ENCODE measurements at regions of chr11 and their contacts with region 1.

Region 1: GRCh38 chr11:86193297-86194095 is 51.1 kb upstream of the EED start:
- DNase-seq: peak; percentile 56 to 91
- ATAC-seq: peak; percentile 97 to 100 (median 98)
- H3K4me3 ChIP-seq: peak overlapping the region in 7 of 10 donors; percentile 23 to 40 (median 36)
- H3K27ac ChIP-seq: peak overlapping the region in 9 of 10 donors; percentile 45 to 91 (median 65)
- H3K4me1 ChIP-seq: peaks cover 0 to 75% (median 20%) of the 10 kb centered on the region in 9 donors
- H3K27me3 ChIP-seq: no peaks in the 10 kb centered on the region
- CTCF ChIP-seq: peak; percentile 59 to 91 (median 80)

Region 2: GRCh38 chr11:85947431-85948272 is 245.8 kb before region 1 on chr11:
- intact Hi-C with region 1: loop called in 1 of 10 experiments (anchors 5 kb)
- DNase-seq: peak in 1 of 2 donors; percentile 74
- ATAC-seq: peak; percentile 64 to 90 (median 85)
- H3K4me3 ChIP-seq: no peak overlapping the region
- H3K27ac ChIP-seq: peak overlapping the region in 8 of 10 donors; percentile 30 to 86 (median 65)
- H3K4me1 ChIP-seq: peaks cover 8 to 40% (median 32%) of the 10 kb centered on the region in 9 donors
- H3K27me3 ChIP-seq: no peaks in the 10 kb centered on the region
- CTCF ChIP-seq: no peak

Region 3: GRCh38 chr11:86041975-86042378 is 151.5 kb before region 1 on chr11:
- intact Hi-C with region 1: loop called (anchors 2 to 10 kb)
- DNase-seq: peak in 1 of 2 donors; percentile 89
- ATAC-seq: peak; percentile 69 to 94 (median 86)
- H3K4me3 ChIP-seq: peak overlapping the region in 7 of 10 donors; percentile 2 to 42 (median 30)
- H3K27ac ChIP-seq: peak overlapping the region in 8 of 10 donors; percentile 2 to 79 (median 61)
- H3K4me1 ChIP-seq: peaks cover 0 to 95% (median 75%) of the 10 kb centered on the region in 9 donors
- H3K27me3 ChIP-seq: no peaks in the 10 kb centered on the region
- CTCF ChIP-seq: peak; percentile 75 to 94 (median 90)

Region 4: GRCh38 chr11:86062719-86063118 is 130.8 kb before region 1 on chr11:
- intact Hi-C with region 1: loop called in 3 of 10 experiments (anchors 2 to 5 kb)
- DNase-seq: no peak
- ATAC-seq: peak in 7 of 8 donors; percentile 23 to 80 (median 35)
- H3K4me3 ChIP-seq: peak overlapping the region in 6 of 10 donors; percentile 1 to 78 (median 11)
- H3K27ac ChIP-seq: peak overlapping the region in 9 of 10 donors; percentile 16 to 99 (median 47)
- H3K4me1 ChIP-seq: peaks cover 0 to 87% (median 86%) of the 10 kb centered on the region in 9 donors
- H3K27me3 ChIP-seq: no peaks in the 10 kb centered on the region
- CTCF ChIP-seq: no peak

Region 5: DNA sequence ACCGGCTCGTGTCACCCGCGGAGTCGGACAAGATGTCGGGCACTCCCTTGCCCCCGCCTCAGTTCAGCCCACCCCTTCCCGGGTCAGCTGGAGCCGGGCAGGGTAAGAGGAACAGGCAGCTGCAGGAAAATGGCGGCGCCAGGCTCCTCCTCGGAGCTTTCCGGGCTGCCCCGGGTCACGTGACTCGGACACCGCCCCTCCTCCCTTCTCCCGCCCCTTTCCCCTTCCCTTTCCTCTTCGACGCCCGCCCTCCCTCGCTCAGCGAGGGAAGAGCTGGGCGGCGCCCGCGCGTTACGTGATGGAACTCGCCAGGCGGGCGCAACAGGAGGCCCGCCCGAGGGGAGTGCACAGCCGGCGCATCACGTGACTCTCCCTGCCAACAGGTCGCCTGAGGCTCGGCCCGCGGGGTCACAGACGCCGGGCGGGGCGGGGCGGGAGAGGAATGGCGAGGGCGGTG is 124.5 kb before region 1 on chr11 and contains the start of gene PICALM:
- intact Hi-C with region 1: loop called in 6 of 10 experiments (anchors 1 to 5 kb)
- DNase-seq: peak; percentile 98 to 99
- ATAC-seq: peak; percentile 92 to 98 (median 96)
- H3K4me3 ChIP-seq: peak within 1 kb of the TSS; percentile 77 to 99 (median 92)
- H3K27ac ChIP-seq: peak within 1 kb of the TSS; percentile 96 to 99 (median 98)
- H3K4me1 ChIP-seq: peaks cover 2 to 44% (median 34%) of the 10 kb centered on the region in 9 donors
- H3K27me3 ChIP-seq: no peaks in the 10 kb centered on the region
- CTCF ChIP-seq: peak in 1 of 9 donors; percentile 18
- total RNA-seq, gene PICALM: 124 to 206 (median 170) TPM

Region 6: GRCh38 chr11:86143087-86144030 is 50.1 kb before region 1 on chr11:
- intact Hi-C with region 1: loop called in 1 of 10 experiments (anchors 5 kb)
- DNase-seq: peak in 1 of 2 donors; percentile 37
- ATAC-seq: peak in 7 of 8 donors; percentile 55 to 80 (median 59)
- H3K4me3 ChIP-seq: no peak overlapping the region
- H3K27ac ChIP-seq: peak overlapping the region in 5 of 10 donors; percentile 0 to 90 (median 43)
- H3K4me1 ChIP-seq: peaks cover 0 to 71% (median 4%) of the 10 kb centered on the region in 9 donors
- H3K27me3 ChIP-seq: no peaks in the 10 kb centered on the region
- CTCF ChIP-seq: no peak

Region 7: GRCh38 chr11:86374586-86374985 is 181.1 kb after region 1 on chr11 and contains the start of gene CCDC81:
- intact Hi-C with region 1: no loop called
- DNase-seq: peak in 1 of 2 donors; percentile 13
- ATAC-seq: peak in 2 of 8 donors; percentile 13 to 40
- H3K4me3 ChIP-seq: peak within 1 kb of the TSS in 6 of 10 donors; percentile 15 to 36 (median 32)
- H3K27ac ChIP-seq: no peak within 1 kb of the TSS
- H3K4me1 ChIP-seq: peaks cover 0 to 7% (median 0%) of the 10 kb centered on the region in 9 donors
- H3K27me3 ChIP-seq: no peaks in the 10 kb centered on the region
- CTCF ChIP-seq: no peak
- total RNA-seq, gene CCDC81: 0.14 to 0.81 (median 0.36) TPM